GM12878 (cell line): ENCODE measurements at regions of chr10 and their contacts with region 1.

Region 1: GRCh38 chr10:106705681-106706100 is 458.8 kb downstream of the SORCS1 start:
- DNase-seq: no peak
- ATAC-seq: peak; percentile 94
- H3K4me3 ChIP-seq: no peak overlapping the region
- H3K27ac ChIP-seq: no peak overlapping the region
- H3K4me1 ChIP-seq: no peaks in the 10 kb centered on the region
- H3K27me3 ChIP-seq: no peaks in the 10 kb centered on the region; a peak in 1 of 4 replicates
- CTCF ChIP-seq: peak; percentile 76 to 83 (median 78)
- EP300 ChIP-seq: no peak
- POLR2A ChIP-seq: no peak
- RAD21 ChIP-seq: peak; percentile 86

Region 2: GRCh38 chr10:106341356-106341755 is 364.3 kb before region 1 on chr10:
- CTCF ChIA-PET with region 1: no interaction called
- POLR2A ChIA-PET with region 1: no interaction called
- RAD21 ChIA-PET with region 1: no interaction called
- SMC1A ChIA-PET with region 1: no interaction called
- in situ Hi-C with region 1: no loop called
- intact Hi-C with region 1: no loop called
- DNase-seq: no peak
- ATAC-seq: no peak
- H3K4me3 ChIP-seq: no peak overlapping the region
- H3K27ac ChIP-seq: no peak overlapping the region
- H3K4me1 ChIP-seq: no peaks in the 10 kb centered on the region
- H3K27me3 ChIP-seq: no peaks in the 10 kb centered on the region
- CTCF ChIP-seq: no peak
- EP300 ChIP-seq: no peak
- POLR2A ChIP-seq: no peak
- RAD21 ChIP-seq: no peak

Region 3: GRCh38 chr10:106592396-106592795 is 113.3 kb before region 1 on chr10:
- CTCF ChIA-PET with region 1: no interaction called
- POLR2A ChIA-PET with region 1: no interaction called
- RAD21 ChIA-PET with region 1: no interaction called
- SMC1A ChIA-PET with region 1: no interaction called
- in situ Hi-C with region 1: no loop called
- intact Hi-C with region 1: no loop called
- DNase-seq: no peak
- ATAC-seq: no peak
- H3K4me3 ChIP-seq: no peak overlapping the region
- H3K27ac ChIP-seq: no peak overlapping the region
- H3K4me1 ChIP-seq: no peaks in the 10 kb centered on the region
- H3K27me3 ChIP-seq: no peaks in the 10 kb centered on the region
- CTCF ChIP-seq: no peak
- EP300 ChIP-seq: no peak
- POLR2A ChIP-seq: no peak
- RAD21 ChIP-seq: no peak

Region 4: GRCh38 chr10:106609470-106610266 is 96.0 kb before region 1 on chr10:
- CTCF ChIA-PET with region 1: no interaction called
- POLR2A ChIA-PET with region 1: no interaction called
- RAD21 ChIA-PET with region 1: no interaction called
- SMC1A ChIA-PET with region 1: no interaction called
- in situ Hi-C with region 1: no loop called
- intact Hi-C with region 1: no loop called
- DNase-seq: no peak
- ATAC-seq: peak; percentile 58
- H3K4me3 ChIP-seq: no peak overlapping the region
- H3K27ac ChIP-seq: no peak overlapping the region
- H3K4me1 ChIP-seq: no peaks in the 10 kb centered on the region
- H3K27me3 ChIP-seq: no peaks in the 10 kb centered on the region
- CTCF ChIP-seq: 0 out of 6 replicates have a peak, but pooled peaks of 2 of the 3 experiments have one; percentile 14 to 19
- EP300 ChIP-seq: no peak
- POLR2A ChIP-seq: no peak
- RAD21 ChIP-seq: peak; percentile 28; the same call in 1 of the 2 replicates

Region 5: DNA sequence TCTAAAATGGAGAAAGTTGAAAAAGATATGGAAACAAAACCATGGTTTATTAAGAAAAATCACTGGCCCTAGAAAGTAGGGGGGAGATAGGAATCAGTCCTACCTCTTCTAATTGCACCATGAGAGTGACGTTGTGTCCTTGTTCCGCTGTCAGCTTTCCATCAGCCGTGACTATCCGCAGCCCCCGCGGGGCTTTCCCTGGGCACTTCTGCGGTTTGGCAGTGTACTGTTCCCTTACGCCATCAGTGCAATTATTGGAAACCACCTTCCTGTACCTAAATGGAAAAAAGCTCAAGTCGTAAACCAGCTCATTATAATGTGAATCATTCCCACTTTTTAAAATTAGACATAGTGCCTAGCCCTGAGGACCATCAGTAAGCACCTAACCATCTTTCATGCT is 53.4 kb before region 1 on chr10:
- CTCF ChIA-PET with region 1: interaction called, 10 read pairs
- POLR2A ChIA-PET with region 1: no interaction called
- RAD21 ChIA-PET with region 1: no interaction called
- SMC1A ChIA-PET with region 1: interaction called, 5 read pairs
- in situ Hi-C with region 1: no loop called
- intact Hi-C with region 1: no loop called
- DNase-seq: peak; percentile 11
- ATAC-seq: peak; percentile 73
- H3K4me3 ChIP-seq: no peak overlapping the region
- H3K27ac ChIP-seq: no peak overlapping the region
- H3K4me1 ChIP-seq: no peaks in the 10 kb centered on the region
- H3K27me3 ChIP-seq: no peaks in the 10 kb centered on the region
- CTCF ChIP-seq: no peak
- EP300 ChIP-seq: peak; percentile 70 to 72; a peak in 2 of 4 replicates
- POLR2A ChIP-seq: no peak
- RAD21 ChIP-seq: no peak

Region 6: GRCh38 chr10:106795619-106796018 is 89.9 kb after region 1 on chr10:
- CTCF ChIA-PET with region 1: interaction called, 16 read pairs
- POLR2A ChIA-PET with region 1: no interaction called
- RAD21 ChIA-PET with region 1: interaction called, 10 read pairs
- SMC1A ChIA-PET with region 1: interaction called, 8 read pairs
- in situ Hi-C with region 1: no loop called
- intact Hi-C with region 1: loop called (anchors 1 kb)
- DNase-seq: peak; percentile 48
- ATAC-seq: peak; percentile 98
- H3K4me3 ChIP-seq: no peak overlapping the region
- H3K27ac ChIP-seq: no peak overlapping the region
- H3K4me1 ChIP-seq: no peaks in the 10 kb centered on the region
- H3K27me3 ChIP-seq: no peaks in the 10 kb centered on the region
- CTCF ChIP-seq: peak; percentile 57 to 78 (median 71)
- EP300 ChIP-seq: no peak
- POLR2A ChIP-seq: no peak
- RAD21 ChIP-seq: peak; percentile 88

Region 7: GRCh38 chr10:106925191-106925590 is 219.5 kb after region 1 on chr10:
- CTCF ChIA-PET with region 1: no interaction called
- POLR2A ChIA-PET with region 1: no interaction called
- RAD21 ChIA-PET with region 1: no interaction called
- SMC1A ChIA-PET with region 1: no interaction called
- in situ Hi-C with region 1: no loop called
- intact Hi-C with region 1: no loop called
- DNase-seq: no peak
- ATAC-seq: no peak; the same call in 2 of the 3 replicates
- H3K4me3 ChIP-seq: no peak overlapping the region
- H3K27ac ChIP-seq: no peak overlapping the region
- H3K4me1 ChIP-seq: peaks cover 5% of the 10 kb centered on the region
- H3K27me3 ChIP-seq: no peaks in the 10 kb centered on the region
- CTCF ChIP-seq: no peak
- EP300 ChIP-seq: no peak
- POLR2A ChIP-seq: no peak
- RAD21 ChIP-seq: no peak

Region 8: GRCh38 chr10:107011105-107011504 is 305.4 kb after region 1 on chr10:
- CTCF ChIA-PET with region 1: interaction called, 7 read pairs
- POLR2A ChIA-PET with region 1: no interaction called
- RAD21 ChIA-PET with region 1: interaction called, 3 read pairs
- SMC1A ChIA-PET with region 1: interaction called, 10 read pairs
- in situ Hi-C with region 1: no loop called
- intact Hi-C with region 1: no loop called
- DNase-seq: no peak
- ATAC-seq: no peak
- H3K4me3 ChIP-seq: no peak overlapping the region
- H3K27ac ChIP-seq: no peak overlapping the region
- H3K4me1 ChIP-seq: no peaks in the 10 kb centered on the region
- H3K27me3 ChIP-seq: no peaks in the 10 kb centered on the region
- CTCF ChIP-seq: peak in 2 of 3 experiments; percentile 16 to 23; a peak in 1 of 6 replicates
- EP300 ChIP-seq: no peak
- POLR2A ChIP-seq: no peak
- RAD21 ChIP-seq: peak; percentile 61

Region 9: GRCh38 chr10:107418407-107418806 is 712.7 kb after region 1 on chr10:
- CTCF ChIA-PET with region 1: no interaction called
- POLR2A ChIA-PET with region 1: no interaction called
- RAD21 ChIA-PET with region 1: no interaction called
- SMC1A ChIA-PET with region 1: no interaction called
- in situ Hi-C with region 1: no loop called
- intact Hi-C with region 1: loop called (anchors 5 kb)
- DNase-seq: peak; percentile 33
- ATAC-seq: peak; percentile 81
- H3K4me3 ChIP-seq: peak overlapping the region; percentile 4; the same call in 1 of the 2 replicates
- H3K27ac ChIP-seq: peak overlapping the region; percentile 53
- H3K4me1 ChIP-seq: peaks cover 21% of the 10 kb centered on the region
- H3K27me3 ChIP-seq: no peaks in the 10 kb centered on the region
- CTCF ChIP-seq: no peak
- EP300 ChIP-seq: no peak
- POLR2A ChIP-seq: no peak
- RAD21 ChIP-seq: no peak

Region 10: GRCh38 chr10:108544494-108545120 is 1838.9 kb after region 1 on chr10:
- CTCF ChIA-PET with region 1: interaction called, 3 read pairs
- POLR2A ChIA-PET with region 1: no interaction called
- RAD21 ChIA-PET with region 1: no interaction called
- SMC1A ChIA-PET with region 1: interaction called, 5 read pairs
- in situ Hi-C with region 1: no loop called
- intact Hi-C with region 1: loop called (anchors 5 kb)
- DNase-seq: no peak
- ATAC-seq: peak; percentile 90
- H3K4me3 ChIP-seq: no peak overlapping the region
- H3K27ac ChIP-seq: no peak overlapping the region
- H3K4me1 ChIP-seq: no peaks in the 10 kb centered on the region; the same call in 1 of the 2 replicates
- H3K27me3 ChIP-seq: no peaks in the 10 kb centered on the region
- CTCF ChIP-seq: peak; percentile 79 to 97 (median 92)
- EP300 ChIP-seq: no peak
- POLR2A ChIP-seq: no peak
- RAD21 ChIP-seq: peak; percentile 90